Activated CD8-positive, alpha-beta T cell treated with anti-CD3 and anti-CD28 coated beads for 36 hours (primary cell): ENCODE measurements at regions of chr12 and their contacts with region 1.

Region 1: GRCh38 chr12:122880668-122881067 is 15.3 kb downstream of the VPS37B start:
- DNase-seq: peak; percentile 51
- ATAC-seq: peak; percentile 51
- H3K4me3 Mint-ChIP-seq: no peak overlapping the region
- H3K27ac Mint-ChIP-seq: no peak overlapping the region
- H3K4me1 Mint-ChIP-seq: peaks cover 91% of the 10 kb centered on the region
- H3K27me3 Mint-ChIP-seq: peaks cover 10% of the 10 kb centered on the region
- CTCF ChIP-seq: peak; percentile 52

Region 2: DNA sequence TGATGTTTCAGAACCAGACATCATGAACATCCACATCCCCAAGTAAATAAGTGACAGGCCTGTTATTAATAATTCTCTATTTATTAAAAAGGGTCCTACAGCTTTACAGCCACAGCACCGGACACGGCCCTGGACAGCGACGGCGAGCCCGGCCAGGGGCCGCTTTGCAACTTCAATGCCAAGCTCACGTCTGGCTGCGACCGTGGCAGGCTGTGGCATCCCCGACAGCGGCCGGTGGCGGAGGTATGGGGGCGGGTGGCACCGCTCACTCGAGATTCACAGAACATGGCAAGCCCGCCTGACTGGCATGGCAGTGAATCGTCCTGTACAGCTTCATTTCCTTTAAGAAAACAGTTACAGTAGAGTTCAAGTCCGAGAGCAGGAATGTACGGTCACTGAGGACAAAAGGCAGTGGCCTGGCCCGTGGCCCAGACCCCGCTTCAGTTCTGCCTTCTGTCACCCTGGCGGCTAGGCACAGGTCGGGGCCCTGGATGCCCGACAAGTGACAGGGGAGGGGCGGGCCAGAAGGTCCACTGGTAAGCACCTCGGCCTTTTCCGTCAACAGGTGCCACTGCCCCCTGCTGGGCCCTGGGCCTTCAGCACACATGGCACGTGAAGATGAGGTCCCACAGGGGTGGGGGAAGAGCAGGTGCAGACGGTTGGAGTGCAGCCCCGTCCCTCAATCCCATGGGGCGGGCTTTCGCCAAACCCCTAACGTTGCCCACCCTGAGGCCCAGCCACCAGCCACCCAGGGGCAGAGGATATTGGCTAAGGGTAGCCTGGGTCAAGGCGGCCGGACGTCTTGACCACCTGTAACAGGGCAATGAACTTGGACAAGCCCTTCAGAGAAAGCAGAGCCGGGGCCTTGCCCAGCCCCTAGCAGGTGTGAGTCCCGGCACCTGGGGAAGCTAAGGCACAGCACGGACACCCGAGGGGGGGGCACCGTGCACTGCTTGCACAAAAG is 15.1 kb before region 1 on chr12:
- CTCF ChIA-PET with region 1: interaction called, 30 read pairs
- POLR2A ChIA-PET with region 1: interaction called, 7 read pairs
- intact Hi-C with region 1: no loop called
- DNase-seq: peak; percentile 40
- ATAC-seq: peak; percentile 52
- H3K4me3 Mint-ChIP-seq: no peak overlapping the region
- H3K27ac Mint-ChIP-seq: no peak overlapping the region
- H3K4me1 Mint-ChIP-seq: no peaks in the 10 kb centered on the region
- H3K27me3 Mint-ChIP-seq: no peaks in the 10 kb centered on the region
- CTCF ChIP-seq: peak; percentile 27

Region 3: GRCh38 chr12:122895705-122896636 is 15.3 kb after region 1 on chr12 and contains the start of gene VPS37B:
- CTCF ChIA-PET with region 1: interaction called, 70 read pairs
- POLR2A ChIA-PET with region 1: interaction called, 239 read pairs
- intact Hi-C with region 1: no loop called
- DNase-seq: peak; percentile 93
- ATAC-seq: peak; percentile 57
- H3K4me3 Mint-ChIP-seq: peak within 1 kb of the TSS; percentile 96
- H3K27ac Mint-ChIP-seq: peak within 1 kb of the TSS; percentile 91
- H3K4me1 Mint-ChIP-seq: peaks cover 85% of the 10 kb centered on the region
- H3K27me3 Mint-ChIP-seq: peaks cover 3% of the 10 kb centered on the region
- CTCF ChIP-seq: no peak
- total RNA-seq, gene VPS37B: 17.8 to 18.4 TPM

Region 4: DNA sequence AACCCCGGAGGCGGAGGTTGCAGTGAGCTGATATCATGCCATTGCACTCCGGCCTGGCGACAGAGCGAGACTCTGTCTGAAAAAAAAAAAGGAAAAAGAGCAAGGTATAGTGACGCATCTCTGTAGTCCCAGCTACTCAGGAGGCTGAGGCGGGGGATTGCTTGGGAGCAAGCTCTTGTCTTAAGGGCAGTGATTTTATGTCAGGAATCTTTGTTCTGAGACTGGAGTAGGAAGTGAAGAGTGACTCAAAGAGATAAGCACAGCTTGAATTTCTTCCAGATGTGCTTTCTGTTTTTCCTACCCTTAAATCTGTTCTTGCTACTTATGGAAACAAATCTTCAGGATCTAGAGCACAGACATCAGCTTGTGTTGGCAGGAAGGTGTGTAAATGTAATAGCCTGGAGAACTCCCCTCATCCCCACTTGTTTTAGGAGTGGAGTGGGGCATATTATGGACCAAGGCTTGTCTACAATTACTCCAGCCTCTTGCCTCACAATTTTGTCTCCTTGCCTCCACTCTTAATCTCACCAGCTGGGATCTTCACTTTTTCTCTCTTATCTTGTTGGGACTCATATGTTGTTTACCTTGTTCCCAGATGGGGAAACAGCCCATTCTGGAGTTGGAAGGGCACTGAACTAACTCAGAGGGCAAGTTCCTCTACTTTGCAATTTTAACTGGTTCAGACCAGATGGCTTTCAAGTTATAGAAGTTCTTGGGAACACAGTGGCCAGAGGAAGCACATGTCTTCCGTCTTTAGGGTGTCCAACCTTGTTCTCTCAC is 711.2 kb after region 1 on chr12:
- CTCF ChIA-PET with region 1: no interaction called
- POLR2A ChIA-PET with region 1: no interaction called
- intact Hi-C with region 1: no loop called
- DNase-seq: no peak
- ATAC-seq: no peak
- H3K4me3 Mint-ChIP-seq: no peak overlapping the region
- H3K27ac Mint-ChIP-seq: peak overlapping the region; percentile 77
- H3K4me1 Mint-ChIP-seq: peaks cover 44% of the 10 kb centered on the region
- H3K27me3 Mint-ChIP-seq: no peaks in the 10 kb centered on the region
- CTCF ChIP-seq: no peak